PC-3 (cell line): ENCODE measurements at regions of chr2 and their contacts with region 1.

Region 1: GRCh38 chr2:64402876-64403275 is 51.1 kb upstream of the LGALSL start:
- DNase-seq: peak; percentile 57
- ATAC-seq: no peak
- H3K4me3 ChIP-seq: no peak overlapping the region
- H3K27ac ChIP-seq: no peak overlapping the region
- H3K4me1 ChIP-seq: peaks cover 66% of the 10 kb centered on the region
- H3K27me3 ChIP-seq: no peaks in the 10 kb centered on the region
- CTCF ChIP-seq: peak; percentile 34; the same call in 1 of the 2 replicates

Region 2: DNA sequence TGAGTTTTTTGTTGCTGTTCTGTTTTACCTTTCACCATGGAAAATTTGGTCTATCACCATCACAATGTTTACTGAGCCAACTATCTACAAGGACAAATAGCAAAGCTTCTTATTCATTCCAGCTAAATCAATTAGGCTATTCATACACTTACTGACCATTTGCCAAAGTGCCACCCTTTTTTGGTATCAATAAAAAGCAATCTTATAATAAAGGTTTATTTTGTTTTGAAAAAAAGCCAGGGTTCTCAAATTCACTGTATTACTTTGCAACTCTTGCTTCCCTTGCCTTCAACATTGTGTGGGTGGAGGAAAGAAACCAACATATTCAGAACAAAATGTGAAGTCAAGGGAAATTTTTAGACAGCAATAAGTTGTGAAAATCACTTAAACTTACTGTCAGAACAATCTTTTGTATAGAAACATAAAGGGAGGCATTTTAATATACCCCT is 273.9 kb before region 1 on chr2:
- CTCF ChIA-PET with region 1: no interaction called
- POLR2A ChIA-PET with region 1: no interaction called
- intact Hi-C with region 1: loop called (anchors 1 kb)
- DNase-seq: no peak
- ATAC-seq: no peak
- H3K4me3 ChIP-seq: no peak overlapping the region
- H3K27ac ChIP-seq: no peak overlapping the region
- H3K4me1 ChIP-seq: peaks cover 9% of the 10 kb centered on the region
- H3K27me3 ChIP-seq: no peaks in the 10 kb centered on the region
- CTCF ChIP-seq: no peak

Region 3: GRCh38 chr2:64383016-64383591 is 19.8 kb before region 1 on chr2:
- CTCF ChIA-PET with region 1: no interaction called
- POLR2A ChIA-PET with region 1: no interaction called
- intact Hi-C with region 1: no loop called
- DNase-seq: no peak
- ATAC-seq: no peak
- H3K4me3 ChIP-seq: no peak overlapping the region
- H3K27ac ChIP-seq: no peak overlapping the region
- H3K4me1 ChIP-seq: no peaks in the 10 kb centered on the region
- H3K27me3 ChIP-seq: no peaks in the 10 kb centered on the region
- CTCF ChIP-seq: no peak

Region 4: DNA sequence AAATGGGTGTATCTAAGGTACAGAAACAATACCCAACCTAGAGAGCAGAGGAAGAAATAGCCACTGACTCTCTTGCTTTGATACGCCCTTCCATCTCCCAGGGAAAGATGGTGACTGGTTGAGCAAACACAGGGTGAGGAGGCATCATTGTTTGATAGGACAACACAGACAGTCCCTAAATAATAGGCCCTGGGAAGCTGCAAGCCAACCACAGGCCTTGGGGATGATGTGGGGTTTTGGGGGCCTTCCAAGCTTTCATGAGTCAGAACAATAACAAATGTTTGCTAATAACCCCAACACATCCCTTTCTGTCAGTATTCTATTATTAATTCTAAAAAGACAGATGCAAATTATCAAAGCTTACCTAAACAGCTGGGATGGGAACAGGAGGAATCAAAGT is 60.9 kb after region 1 on chr2:
- CTCF ChIA-PET with region 1: no interaction called
- POLR2A ChIA-PET with region 1: no interaction called
- intact Hi-C with region 1: loop called (anchors 2 kb)
- DNase-seq: peak; percentile 68
- ATAC-seq: peak; percentile 99
- H3K4me3 ChIP-seq: no peak overlapping the region
- H3K27ac ChIP-seq: no peak overlapping the region
- H3K4me1 ChIP-seq: peaks cover 14% of the 10 kb centered on the region
- H3K27me3 ChIP-seq: no peaks in the 10 kb centered on the region
- CTCF ChIP-seq: no peak